ENCODE measurements at regions of chr4 and their contacts with region 1.

Region 1: GRCh38 chr4:108144451-108144850 is 24.3 kb downstream of the LEF1 start:
- DNase-seq: peak; percentile 81
- H3K4me3 Mint-ChIP-seq: peak overlapping the region; percentile 59
- H3K27ac Mint-ChIP-seq: peak overlapping the region; percentile 93
- H3K4me1 Mint-ChIP-seq: peaks cover 85% of the 10 kb centered on the region
- H3K27me3 Mint-ChIP-seq: no peaks in the 10 kb centered on the region

Region 2: GRCh38 chr4:108166441-108167315 is 22.2 kb after region 1 on chr4:
- intact Hi-C with region 1: loop called (anchors 1 kb)
- DNase-seq: peak; percentile 90
- H3K4me3 Mint-ChIP-seq: peak overlapping the region; percentile 97
- H3K27ac Mint-ChIP-seq: peak overlapping the region; percentile 94
- H3K4me1 Mint-ChIP-seq: peaks cover 55% of the 10 kb centered on the region
- H3K27me3 Mint-ChIP-seq: peaks cover 14% of the 10 kb centered on the region